ENCODE measurements at regions of chr17 and their contacts with region 1.

Region 1: GRCh38 chr17:50707289-50708049 is at the start of gene ANKRD40:
- H3K4me3 Mint-ChIP-seq: peak within 1 kb of the TSS; percentile 92
- H3K27ac Mint-ChIP-seq: peak within 1 kb of the TSS; percentile 97
- H3K4me1 Mint-ChIP-seq: peaks cover 29% of the 10 kb centered on the region
- H3K27me3 Mint-ChIP-seq: no peaks in the 10 kb centered on the region

Region 2: DNA sequence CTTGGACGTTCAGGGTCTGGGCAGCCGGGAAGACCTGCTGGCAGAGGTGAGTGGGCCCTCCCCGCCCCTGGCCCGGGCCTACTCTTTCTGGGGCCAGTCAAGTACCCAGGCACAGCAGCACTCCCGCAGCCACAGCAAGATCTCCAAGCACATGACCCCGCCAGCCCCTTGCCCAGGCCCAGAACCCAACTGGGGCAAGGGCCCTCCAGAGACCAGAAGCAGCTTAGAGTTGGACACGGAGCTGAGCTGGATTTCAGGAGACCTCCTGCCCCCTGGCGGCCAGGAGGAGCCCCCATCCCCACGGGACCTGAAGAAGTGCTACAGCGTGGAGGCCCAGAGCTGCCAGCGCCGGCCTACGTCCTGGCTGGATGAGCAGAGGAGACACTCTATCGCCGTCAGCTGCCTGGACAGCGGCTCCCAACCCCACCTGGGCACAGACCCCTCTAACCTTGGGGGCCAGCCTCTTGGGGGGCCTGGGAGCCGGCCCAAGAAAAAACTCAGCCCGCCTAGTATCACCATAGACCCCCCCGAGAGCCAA is 81.4 kb before region 1 on chr17:
- intact Hi-C with region 1: loop called (anchors 10 kb)
- H3K4me3 Mint-ChIP-seq: no peak overlapping the region
- H3K27ac Mint-ChIP-seq: no peak overlapping the region
- H3K4me1 Mint-ChIP-seq: peaks cover 82% of the 10 kb centered on the region
- H3K27me3 Mint-ChIP-seq: peaks cover 49% of the 10 kb centered on the region

Region 3: DNA sequence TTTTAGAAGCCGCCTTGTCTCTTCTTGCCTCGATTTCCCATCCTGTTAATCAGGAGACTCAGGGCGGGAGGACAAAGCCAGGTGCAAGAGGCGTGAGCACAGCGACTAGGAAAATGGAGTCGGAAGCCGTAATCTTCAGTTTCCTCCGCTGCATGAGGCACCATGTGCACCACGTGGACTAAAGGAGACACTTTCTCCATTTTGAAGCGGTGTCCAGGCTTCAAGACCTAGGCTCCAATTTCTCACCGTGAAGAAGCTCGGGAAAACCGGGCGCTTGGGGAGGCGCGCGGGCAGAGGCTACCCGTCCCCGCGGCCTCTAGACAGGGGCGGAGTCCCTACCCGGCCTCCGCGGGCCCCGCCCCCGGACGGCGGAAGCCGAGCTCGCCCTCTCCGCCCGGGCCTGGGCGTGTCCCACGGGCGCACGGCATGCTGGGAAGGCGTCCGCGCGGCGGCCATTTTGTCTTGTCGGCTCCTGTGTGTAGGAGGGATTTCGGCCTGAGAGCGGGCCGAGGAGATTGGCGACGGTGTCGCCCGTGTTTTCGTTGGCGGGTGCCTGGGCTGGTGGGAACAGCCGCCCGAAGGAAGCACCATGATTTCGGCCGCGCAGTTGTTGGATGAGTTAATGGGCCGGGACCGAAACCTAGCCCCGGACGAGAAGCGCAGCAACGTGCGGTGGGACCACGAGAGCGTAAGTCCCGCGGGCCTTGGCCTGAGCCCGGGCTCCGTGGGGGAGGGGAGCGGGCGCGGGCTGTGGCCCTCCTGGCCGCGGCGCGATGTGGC is 11.9 kb after region 1 on chr17 and contains the start of gene LUC7L3:
- intact Hi-C with region 1: loop called (anchors 1 kb)
- H3K4me3 Mint-ChIP-seq: peak within 1 kb of the TSS; percentile 99
- H3K27ac Mint-ChIP-seq: peak within 1 kb of the TSS; percentile 97
- H3K4me1 Mint-ChIP-seq: peaks cover 39% of the 10 kb centered on the region
- H3K27me3 Mint-ChIP-seq: no peaks in the 10 kb centered on the region

Region 4: DNA sequence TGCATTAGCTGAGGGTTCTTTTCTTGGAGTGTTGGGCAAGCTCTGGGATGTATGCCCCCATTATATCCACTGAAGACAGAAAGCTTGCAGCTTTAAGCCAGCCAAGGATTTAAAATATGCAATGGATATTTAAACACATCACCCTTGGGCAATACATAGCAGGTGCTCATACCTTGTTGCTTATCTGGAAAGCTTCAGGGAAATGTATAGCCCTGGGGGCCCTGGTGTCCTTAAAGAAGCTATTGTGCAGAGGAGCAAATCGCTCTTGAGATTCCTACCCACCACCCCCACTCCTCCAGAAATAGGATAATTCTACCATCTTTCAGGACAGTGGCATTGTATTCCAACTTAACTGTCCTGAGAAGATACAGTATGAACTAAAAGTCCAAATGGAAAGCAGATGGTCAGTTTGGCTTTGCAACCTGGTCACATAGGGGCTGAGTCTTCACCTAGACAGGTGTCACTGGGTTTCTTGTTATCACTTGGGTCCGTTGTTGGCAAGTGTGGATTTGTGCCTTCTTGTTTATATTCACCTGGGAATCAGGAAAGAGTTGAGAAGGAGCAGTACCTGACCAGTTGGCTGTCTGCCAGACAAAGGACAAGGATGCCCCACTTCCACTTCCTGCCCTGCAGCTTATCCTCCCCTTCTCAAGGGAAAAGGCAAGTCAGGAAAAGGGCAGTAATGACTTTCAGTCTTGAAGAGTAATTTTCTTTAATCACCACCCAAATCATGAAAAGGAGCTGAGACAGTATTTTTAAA is 56.4 kb after region 1 on chr17:
- intact Hi-C with region 1: loop called (anchors 5 kb)
- H3K4me3 Mint-ChIP-seq: no peak overlapping the region
- H3K27ac Mint-ChIP-seq: peak overlapping the region; percentile 96
- H3K4me1 Mint-ChIP-seq: peaks cover 29% of the 10 kb centered on the region
- H3K27me3 Mint-ChIP-seq: peaks cover under 1% of the 10 kb centered on the region